Activated CD4-positive, alpha-beta T cell treated with anti-CD3 and anti-CD28 coated beads for 36 hours (primary cell): ENCODE measurements at regions of chr17 and their contacts with region 1.

Region 1: DNA sequence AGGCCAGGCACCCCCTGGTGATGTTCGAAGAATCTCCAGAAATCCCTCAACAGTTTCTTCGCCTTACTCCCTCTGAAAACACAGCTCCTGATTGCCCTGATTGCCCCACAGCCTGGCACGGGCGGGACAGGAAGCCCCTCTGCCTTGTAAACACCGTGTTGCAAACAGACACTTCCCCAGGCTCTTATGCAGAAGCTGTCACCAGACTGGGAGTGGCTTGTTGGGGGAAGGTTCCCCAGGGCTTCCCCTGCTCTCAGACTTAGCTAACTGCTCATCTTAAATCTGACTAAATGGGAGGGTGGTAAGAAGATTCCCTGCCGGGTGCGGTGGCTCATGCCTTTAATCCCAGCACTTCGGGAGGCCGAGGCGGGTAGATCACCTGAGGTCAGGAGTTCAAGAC is 11.2 kb downstream of the PIK3R5 start:
- DNase-seq: peak; percentile 85
- ATAC-seq: peak; percentile 73
- H3K4me3 Mint-ChIP-seq: peak overlapping the region; percentile 2
- H3K27ac Mint-ChIP-seq: peak overlapping the region; percentile 86
- H3K4me1 Mint-ChIP-seq: peaks cover 95% of the 10 kb centered on the region
- H3K27me3 Mint-ChIP-seq: no peaks in the 10 kb centered on the region

Region 2: DNA sequence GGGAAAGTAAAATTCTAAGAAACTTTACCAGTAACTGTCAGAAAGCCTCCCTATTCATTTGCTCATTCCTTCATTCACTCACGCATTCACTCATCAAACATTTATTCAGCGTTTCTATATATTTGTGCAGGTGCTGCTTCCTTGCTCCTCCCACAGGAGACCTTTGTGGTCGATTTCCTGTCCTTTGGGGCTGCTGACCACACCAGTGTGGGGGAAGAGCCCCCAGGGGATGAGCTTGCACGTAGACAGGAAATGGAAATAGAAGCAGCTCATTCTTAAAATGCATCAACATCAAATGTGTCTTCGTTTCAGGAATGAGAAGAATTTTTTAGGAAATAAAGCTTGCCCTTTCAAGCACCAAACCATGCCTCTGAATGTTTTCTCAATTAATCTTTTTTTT is 96.4 kb before region 1 on chr17:
- CTCF ChIA-PET with region 1: no interaction called
- POLR2A ChIA-PET with region 1: interaction called, 3 read pairs
- intact Hi-C with region 1: loop called in 1 of 2 experiments (anchors 5 kb)
- DNase-seq: peak; percentile 81
- ATAC-seq: peak; percentile 70
- H3K4me3 Mint-ChIP-seq: peak overlapping the region; percentile 6
- H3K27ac Mint-ChIP-seq: peak overlapping the region; percentile 80
- H3K4me1 Mint-ChIP-seq: peaks cover 54% of the 10 kb centered on the region
- H3K27me3 Mint-ChIP-seq: no peaks in the 10 kb centered on the region

Region 3: DNA sequence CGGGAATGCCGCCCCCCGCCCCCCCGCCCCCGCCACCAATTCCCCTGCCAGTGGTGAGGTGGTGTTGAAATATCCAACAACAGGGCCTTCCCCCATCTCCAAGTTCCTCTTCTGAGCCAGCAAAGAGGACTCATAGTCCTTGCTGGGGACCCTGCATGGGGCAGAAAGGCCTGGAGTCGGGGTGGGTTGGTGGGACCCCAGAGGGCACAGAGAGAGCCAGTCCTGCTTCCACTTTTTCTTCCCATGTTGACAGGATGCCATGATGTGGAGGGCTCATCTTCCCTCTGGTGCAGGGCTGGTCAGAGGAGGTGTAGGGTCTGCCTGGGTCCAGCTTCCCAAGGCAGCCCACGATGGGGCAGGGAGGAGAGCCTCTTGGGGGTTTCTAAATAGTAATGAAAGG is 37.9 kb before region 1 on chr17:
- CTCF ChIA-PET with region 1: interaction called, 5 read pairs
- POLR2A ChIA-PET with region 1: no interaction called
- intact Hi-C with region 1: loop called in 1 of 2 experiments (anchors 5 kb)
- DNase-seq: no peak
- ATAC-seq: no peak
- H3K4me3 Mint-ChIP-seq: no peak overlapping the region
- H3K27ac Mint-ChIP-seq: peak overlapping the region; percentile 55
- H3K4me1 Mint-ChIP-seq: peaks cover 28% of the 10 kb centered on the region
- H3K27me3 Mint-ChIP-seq: no peaks in the 10 kb centered on the region

Region 4: DNA sequence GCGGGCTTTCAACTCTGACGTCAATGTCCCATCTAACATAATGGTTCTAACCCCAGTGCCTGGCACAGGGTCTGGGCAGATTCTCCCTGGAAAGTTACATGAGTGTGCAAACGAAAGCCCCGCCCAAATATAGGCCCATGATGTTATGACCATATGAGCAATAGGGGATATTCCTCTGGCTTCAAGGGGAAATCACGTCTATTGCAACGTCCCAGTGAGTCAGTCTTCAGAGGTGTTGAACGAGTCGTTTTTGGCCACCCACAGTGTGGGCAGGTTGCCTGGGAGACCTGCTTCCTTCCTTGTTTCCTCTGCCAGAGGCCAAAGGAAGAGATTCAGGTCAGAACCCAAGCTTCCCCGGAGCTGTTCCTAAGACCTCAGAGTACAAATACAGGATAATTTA is 19.1 kb before region 1 on chr17:
- CTCF ChIA-PET with region 1: interaction called, 32 read pairs
- POLR2A ChIA-PET with region 1: interaction called, 12 read pairs
- intact Hi-C with region 1: loop called (anchors 1 kb)
- DNase-seq: peak; percentile 89
- ATAC-seq: peak; percentile 80
- H3K4me3 Mint-ChIP-seq: peak overlapping the region; percentile 42
- H3K27ac Mint-ChIP-seq: peak overlapping the region; percentile 94
- H3K4me1 Mint-ChIP-seq: peaks cover 66% of the 10 kb centered on the region
- H3K27me3 Mint-ChIP-seq: no peaks in the 10 kb centered on the region

Region 5: GRCh38 chr17:8941520-8941919 is 12.8 kb before region 1 on chr17:
- CTCF ChIA-PET with region 1: interaction called, 32 read pairs
- POLR2A ChIA-PET with region 1: interaction called, 12 read pairs
- intact Hi-C with region 1: loop called (anchors 1 kb)
- DNase-seq: peak; percentile 84
- ATAC-seq: peak; percentile 51
- H3K4me3 Mint-ChIP-seq: peak overlapping the region; percentile 52
- H3K27ac Mint-ChIP-seq: peak overlapping the region; percentile 89
- H3K4me1 Mint-ChIP-seq: peaks cover 75% of the 10 kb centered on the region
- H3K27me3 Mint-ChIP-seq: no peaks in the 10 kb centered on the region